CD8-positive, alpha-beta T cell (primary cell): ENCODE measurements at regions of chr2 and their contacts with region 1.

Region 1: DNA sequence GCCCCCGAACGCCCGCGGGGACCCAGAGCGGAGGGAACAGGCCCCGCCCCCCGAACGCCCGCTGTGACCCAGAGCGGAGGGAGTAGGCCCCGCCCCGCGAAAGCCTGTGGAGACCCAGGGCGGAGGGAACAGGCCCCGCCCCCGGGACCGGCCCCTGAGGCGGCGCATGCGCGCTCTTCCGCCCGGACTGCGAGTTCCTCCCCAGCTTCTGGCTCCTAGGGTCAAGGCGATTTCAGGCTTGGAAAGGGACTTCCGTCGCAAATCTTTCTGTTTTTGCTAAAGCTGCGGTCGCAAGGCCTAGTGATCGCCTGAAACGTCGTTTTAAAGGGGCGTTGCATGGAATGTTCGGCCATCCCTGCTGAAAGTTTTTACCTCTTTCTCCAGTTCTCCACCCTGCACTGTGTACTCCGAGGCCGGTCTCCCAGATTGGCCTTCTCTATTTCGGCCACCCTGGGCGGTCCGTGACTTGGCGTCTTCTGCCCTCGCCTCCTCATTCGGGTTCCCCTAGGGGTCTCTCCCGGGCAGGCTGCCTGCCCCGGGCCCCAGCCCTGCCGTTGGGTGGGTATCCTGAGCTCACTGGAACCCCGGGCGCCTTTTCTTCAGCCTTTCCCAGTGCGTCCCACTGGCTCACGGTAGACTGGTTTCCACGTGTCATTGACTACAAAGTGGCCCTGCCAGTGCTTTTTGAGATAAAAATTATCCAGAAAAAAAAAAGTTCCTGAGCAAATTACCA is 372 bp upstream of the WDSUB1 start:
- DNase-seq: peak; percentile 93 to 99 (median 97)
- ATAC-seq: peak; percentile 99
- H3K4me3 ChIP-seq: peak overlapping the region; percentile 65 to 86
- H3K4me3 Mint-ChIP-seq: peak overlapping the region; percentile 90
- H3K27ac ChIP-seq: peak overlapping the region; percentile 58 to 69
- H3K27ac Mint-ChIP-seq: peak overlapping the region; percentile 86
- H3K4me1 ChIP-seq: peaks cover 18% of the 10 kb centered on the region
- H3K4me1 Mint-ChIP-seq: peaks cover 33% of the 10 kb centered on the region
- H3K27me3 ChIP-seq: no peaks in the 10 kb centered on the region
- H3K27me3 Mint-ChIP-seq: no peaks in the 10 kb centered on the region
- CTCF ChIP-seq: no peak

Region 2: DNA sequence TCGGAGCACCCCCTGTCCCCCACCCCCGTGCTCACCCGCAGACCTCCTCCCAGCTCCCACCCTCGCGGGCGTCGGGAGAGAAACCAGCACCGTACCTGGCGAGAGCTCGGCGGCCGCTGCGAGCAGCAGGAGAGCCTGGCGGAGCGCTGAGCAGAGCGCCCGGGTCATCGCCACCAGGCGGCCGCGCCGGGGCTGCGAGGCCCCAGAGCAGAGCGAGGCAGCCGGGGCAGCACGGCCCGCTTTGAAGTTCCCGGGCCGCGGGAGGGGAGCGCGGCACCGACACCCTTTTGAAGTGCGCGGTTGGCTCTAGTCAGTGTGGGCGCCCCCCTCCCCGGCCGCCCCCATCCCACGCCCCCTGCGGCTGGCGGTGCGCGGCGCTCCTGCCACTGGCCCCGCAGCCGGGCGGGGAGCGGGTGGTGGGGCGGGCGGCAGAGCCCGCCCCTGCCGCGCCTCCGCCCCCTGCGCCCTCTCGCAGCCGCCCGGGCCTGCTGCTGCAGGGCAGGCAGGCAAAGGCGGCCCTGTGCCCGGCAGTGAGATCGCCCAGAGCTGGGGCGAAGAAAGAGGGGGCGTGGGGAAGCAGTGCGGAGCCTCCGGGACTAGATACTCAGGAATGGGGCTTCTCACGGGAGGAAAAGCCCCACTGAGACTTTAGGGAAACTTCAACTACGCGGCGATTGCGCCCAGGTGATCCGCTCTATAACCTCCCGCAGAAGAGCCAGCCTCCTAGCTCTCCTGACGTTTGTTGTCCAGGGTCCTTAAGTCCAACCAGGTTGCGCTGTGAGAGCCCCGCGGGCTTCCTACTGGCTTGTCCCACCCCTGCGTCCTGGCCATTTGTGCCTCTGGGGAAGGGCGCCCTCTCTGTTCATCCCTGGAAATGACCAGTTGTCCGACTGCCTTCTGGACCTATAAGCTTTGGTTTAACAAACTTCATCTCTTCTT is 1658.1 kb before region 1 on chr2 and contains the start of gene ACVR1C:
- CTCF ChIA-PET with region 1: no interaction called
- POLR2A ChIA-PET with region 1: no interaction called
- intact Hi-C with region 1: loop called in 1 of 2 experiments (anchors 2 kb)
- DNase-seq: peak; percentile 32 to 89 (median 62)
- ATAC-seq: peak; percentile 81
- H3K4me3 ChIP-seq: peak within 1 kb of the TSS; percentile 65 to 81
- H3K4me3 Mint-ChIP-seq: peak within 1 kb of the TSS; percentile 96
- H3K27ac ChIP-seq: peak within 1 kb of the TSS in 1 of 2 experiments; percentile 42
- H3K27ac Mint-ChIP-seq: peak within 1 kb of the TSS; percentile 76
- H3K4me1 ChIP-seq: peaks cover 29% of the 10 kb centered on the region
- H3K4me1 Mint-ChIP-seq: peaks cover 37% of the 10 kb centered on the region
- H3K27me3 ChIP-seq: no peaks in the 10 kb centered on the region
- H3K27me3 Mint-ChIP-seq: no peaks in the 10 kb centered on the region
- CTCF ChIP-seq: peak; percentile 26
- total RNA-seq, gene ACVR1C: 2.3 to 2.4 TPM

Region 3: GRCh38 chr2:157876066-157876787 is 1410.6 kb before region 1 on chr2 and contains the start of gene ACVR1:
- CTCF ChIA-PET with region 1: no interaction called
- POLR2A ChIA-PET with region 1: no interaction called
- intact Hi-C with region 1: loop called in 1 of 2 experiments (anchors 5 kb)
- DNase-seq: peak; percentile 37 to 92 (median 78)
- ATAC-seq: peak; percentile 72
- H3K4me3 ChIP-seq: peak within 1 kb of the TSS; percentile 53 to 74
- H3K4me3 Mint-ChIP-seq: peak within 1 kb of the TSS; percentile 94
- H3K27ac ChIP-seq: peak within 1 kb of the TSS; percentile 1 to 29
- H3K27ac Mint-ChIP-seq: peak within 1 kb of the TSS; percentile 90
- H3K4me1 ChIP-seq: peaks cover 10% of the 10 kb centered on the region
- H3K4me1 Mint-ChIP-seq: peaks cover 48% of the 10 kb centered on the region
- H3K27me3 ChIP-seq: no peaks in the 10 kb centered on the region
- H3K27me3 Mint-ChIP-seq: no peaks in the 10 kb centered on the region
- CTCF ChIP-seq: peak; percentile 27
- total RNA-seq, gene ACVR1: 7.0 to 8.3 TPM

Region 4: DNA sequence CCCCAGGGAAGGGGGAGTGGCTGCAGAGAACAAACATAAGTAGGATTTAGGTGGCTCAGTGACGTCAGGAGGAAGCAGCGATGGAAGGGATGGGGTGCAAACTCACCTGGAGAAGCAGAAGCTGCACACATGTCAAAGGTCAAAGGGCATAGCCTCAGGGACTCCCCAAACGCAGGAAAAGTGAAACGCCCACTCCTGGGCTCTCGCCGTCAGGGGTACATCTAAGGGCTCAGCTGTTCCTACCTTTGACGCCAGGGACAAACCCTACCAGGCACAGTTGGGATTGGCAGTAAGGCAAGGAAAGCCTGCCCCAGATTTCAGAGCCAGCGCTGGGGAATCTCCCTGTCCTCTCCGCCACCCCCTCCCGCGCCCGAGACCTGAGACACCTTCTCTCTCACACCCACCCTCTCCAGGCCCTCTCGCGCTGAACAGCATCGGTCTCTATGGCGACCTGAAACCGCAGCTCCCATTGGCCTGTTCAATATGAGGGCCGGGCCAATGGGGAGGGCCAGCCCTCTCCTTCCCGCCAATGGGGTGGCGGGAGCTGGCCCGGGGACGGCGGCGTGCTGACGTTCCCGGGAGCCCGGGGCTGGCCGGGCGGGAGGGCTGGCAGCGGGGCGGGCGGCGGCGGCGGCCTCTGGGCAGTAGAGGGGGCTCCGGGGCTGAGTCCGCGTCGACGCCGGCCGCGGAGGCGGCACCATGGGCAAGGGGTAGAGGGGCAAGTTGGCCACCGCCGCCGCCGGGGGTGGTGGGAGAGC is 830.4 kb before region 1 on chr2 and contains the starts of genes CCDC148 and PKP4:
- CTCF ChIA-PET with region 1: no interaction called
- POLR2A ChIA-PET with region 1: no interaction called
- intact Hi-C with region 1: loop called (anchors 5 to 10 kb)
- DNase-seq: peak; percentile 74 to 97 (median 86)
- ATAC-seq: peak; percentile 91
- H3K4me3 ChIP-seq: peak within 1 kb of the TSS; percentile 69 to 81
- H3K4me3 Mint-ChIP-seq: peak within 1 kb of the TSS; percentile 96
- H3K27ac ChIP-seq: peak within 1 kb of the TSS; percentile 23 to 49
- H3K27ac Mint-ChIP-seq: peak within 1 kb of the TSS; percentile 76
- H3K4me1 ChIP-seq: peaks cover 12% of the 10 kb centered on the region
- H3K4me1 Mint-ChIP-seq: peaks cover 16% of the 10 kb centered on the region
- H3K27me3 ChIP-seq: no peaks in the 10 kb centered on the region
- H3K27me3 Mint-ChIP-seq: peaks cover 13% of the 10 kb centered on the region
- CTCF ChIP-seq: no peak
- total RNA-seq, gene CCDC148: not detected
- total RNA-seq, gene PKP4: 5.7 to 8.1 TPM

Region 5: GRCh38 chr2:158464426-158465281 is 822.2 kb before region 1 on chr2:
- CTCF ChIA-PET with region 1: no interaction called
- POLR2A ChIA-PET with region 1: no interaction called
- intact Hi-C with region 1: loop called (anchors 5 to 10 kb)
- DNase-seq: peak in 2 of 9 experiments; percentile 33 to 42
- ATAC-seq: peak; percentile 73
- H3K4me3 ChIP-seq: no peak overlapping the region
- H3K4me3 Mint-ChIP-seq: no peak overlapping the region
- H3K27ac ChIP-seq: no peak overlapping the region
- H3K27ac Mint-ChIP-seq: no peak overlapping the region
- H3K4me1 ChIP-seq: no peaks in the 10 kb centered on the region
- H3K4me1 Mint-ChIP-seq: no peaks in the 10 kb centered on the region
- H3K27me3 ChIP-seq: no peaks in the 10 kb centered on the region
- H3K27me3 Mint-ChIP-seq: peaks cover 2% of the 10 kb centered on the region
- CTCF ChIP-seq: peak; percentile 69

Region 6: DNA sequence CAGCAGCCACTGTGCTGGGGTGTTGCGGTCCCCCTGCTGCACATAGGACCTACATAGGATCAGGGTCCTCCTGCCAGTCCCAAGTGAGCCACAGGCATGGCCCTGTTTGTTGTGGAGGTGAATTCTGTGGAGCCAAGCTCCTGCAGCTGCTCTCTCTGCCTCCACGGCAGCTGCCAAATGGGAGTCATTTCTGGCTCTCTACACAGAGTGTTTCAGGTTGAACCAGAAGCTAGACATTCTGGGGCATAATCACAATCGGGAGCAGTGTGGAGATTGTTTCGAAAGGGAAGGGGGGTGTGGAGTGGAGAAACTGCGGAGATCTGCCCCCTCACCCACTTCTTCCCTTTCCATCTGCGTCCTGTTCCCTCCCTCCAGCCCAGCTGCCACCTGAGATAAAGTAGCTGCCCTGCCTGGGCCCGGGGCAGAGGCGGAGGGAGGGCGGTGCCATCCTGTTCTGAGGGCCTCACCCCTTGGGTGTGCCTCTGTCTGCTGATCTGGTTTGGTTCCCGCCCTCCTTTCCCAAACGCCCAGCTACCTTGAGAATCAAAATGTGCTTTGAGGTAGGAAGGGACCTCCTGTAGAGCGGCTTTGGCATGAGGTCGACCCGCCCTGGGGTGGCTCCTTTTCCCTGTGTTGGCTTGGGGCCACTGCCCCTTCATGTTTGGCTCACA is 139.7 kb before region 1 on chr2:
- CTCF ChIA-PET with region 1: no interaction called
- POLR2A ChIA-PET with region 1: no interaction called
- intact Hi-C with region 1: loop called in 1 of 2 experiments (anchors 10 kb)
- DNase-seq: no peak
- ATAC-seq: no peak
- H3K4me3 ChIP-seq: no peak overlapping the region
- H3K4me3 Mint-ChIP-seq: no peak overlapping the region
- H3K27ac ChIP-seq: no peak overlapping the region
- H3K27ac Mint-ChIP-seq: no peak overlapping the region
- H3K4me1 ChIP-seq: peaks cover 11% of the 10 kb centered on the region
- H3K4me1 Mint-ChIP-seq: peaks cover 24% of the 10 kb centered on the region
- H3K27me3 ChIP-seq: peaks cover 0 to 5% of the 10 kb centered on the region in 2 experiments
- H3K27me3 Mint-ChIP-seq: peaks cover 5% of the 10 kb centered on the region
- CTCF ChIP-seq: no peak

Region 7: GRCh38 chr2:159201360-159202063 is 85.4 kb before region 1 on chr2:
- CTCF ChIA-PET with region 1: no interaction called
- POLR2A ChIA-PET with region 1: no interaction called
- intact Hi-C with region 1: no loop called
- DNase-seq: peak in 6 of 9 experiments; percentile 12 to 75 (median 30)
- ATAC-seq: peak; percentile 82
- H3K4me3 ChIP-seq: no peak overlapping the region
- H3K4me3 Mint-ChIP-seq: no peak overlapping the region
- H3K27ac ChIP-seq: no peak overlapping the region
- H3K27ac Mint-ChIP-seq: peak overlapping the region; percentile 49
- H3K4me1 ChIP-seq: peaks cover 18% of the 10 kb centered on the region
- H3K4me1 Mint-ChIP-seq: peaks cover 35% of the 10 kb centered on the region
- H3K27me3 ChIP-seq: no peaks in the 10 kb centered on the region
- H3K27me3 Mint-ChIP-seq: no peaks in the 10 kb centered on the region
- CTCF ChIP-seq: no peak

Region 8: DNA sequence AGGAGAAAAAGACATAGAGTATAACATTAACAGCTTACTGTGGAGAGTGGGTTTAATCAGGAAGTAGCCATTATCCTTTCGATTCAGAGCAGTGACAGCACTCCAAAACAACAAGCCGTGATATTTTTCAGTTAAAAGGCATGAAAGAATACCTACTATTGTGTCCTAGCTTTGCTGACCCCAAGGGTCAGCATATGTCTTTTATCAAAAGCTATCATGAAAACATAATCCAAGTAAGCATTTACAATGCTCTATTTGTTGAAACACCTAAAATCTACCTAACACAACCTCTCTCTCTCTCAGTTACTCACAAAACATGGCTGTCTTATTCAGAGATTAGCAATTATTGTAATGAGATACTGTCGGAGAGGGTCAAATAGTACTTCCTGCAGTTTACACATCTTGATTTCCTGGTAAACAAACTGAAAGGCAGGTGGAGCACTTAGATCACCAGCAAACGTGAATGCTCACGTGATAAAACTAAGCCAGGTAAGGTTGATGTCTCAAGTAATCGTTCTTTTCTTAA is 229.4 kb after region 1 on chr2:
- CTCF ChIA-PET with region 1: no interaction called
- POLR2A ChIA-PET with region 1: interaction called, 4 read pairs
- intact Hi-C with region 1: loop called (anchors 2 to 5 kb)
- DNase-seq: peak in 3 of 9 experiments; percentile 29 to 84 (median 74)
- ATAC-seq: peak; percentile 96
- H3K4me3 ChIP-seq: peak overlapping the region; percentile 48 to 50
- H3K4me3 Mint-ChIP-seq: peak overlapping the region; percentile 81
- H3K27ac ChIP-seq: peak overlapping the region; percentile 69 to 72
- H3K27ac Mint-ChIP-seq: peak overlapping the region; percentile 95
- H3K4me1 ChIP-seq: peaks cover 19% of the 10 kb centered on the region
- H3K4me1 Mint-ChIP-seq: peaks cover 38% of the 10 kb centered on the region
- H3K27me3 ChIP-seq: no peaks in the 10 kb centered on the region
- H3K27me3 Mint-ChIP-seq: no peaks in the 10 kb centered on the region
- CTCF ChIP-seq: no peak